Ascending aorta (tissue), 2 donors: ENCODE measurements at regions of chr14 and their contacts with region 1.

Region 1: GRCh38 chr14:91510174-91511042 is at the start of gene PPP4R3A:
- DNase-seq: peak; percentile 79 to 95
- H3K4me3 ChIP-seq: peak within 1 kb of the TSS; percentile 91 to 99
- H3K27ac ChIP-seq: peak within 1 kb of the TSS; percentile 96 to 100
- H3K4me1 ChIP-seq: peaks cover 0 to 19% of the 10 kb centered on the region in 2 donors
- H3K27me3 ChIP-seq: no peaks in the 10 kb centered on the region
- CTCF ChIP-seq: no peak
- total RNA-seq, gene PPP4R3A: 76.2 TPM

Region 2: GRCh38 chr14:90475298-90475697 is 1035.1 kb before region 1 on chr14:
- intact Hi-C with region 1: no loop called
- DNase-seq: no peak
- H3K4me3 ChIP-seq: no peak overlapping the region
- H3K27ac ChIP-seq: no peak overlapping the region
- H3K4me1 ChIP-seq: no peaks in the 10 kb centered on the region
- H3K27me3 ChIP-seq: no peaks in the 10 kb centered on the region
- CTCF ChIP-seq: no peak

Region 3: DNA sequence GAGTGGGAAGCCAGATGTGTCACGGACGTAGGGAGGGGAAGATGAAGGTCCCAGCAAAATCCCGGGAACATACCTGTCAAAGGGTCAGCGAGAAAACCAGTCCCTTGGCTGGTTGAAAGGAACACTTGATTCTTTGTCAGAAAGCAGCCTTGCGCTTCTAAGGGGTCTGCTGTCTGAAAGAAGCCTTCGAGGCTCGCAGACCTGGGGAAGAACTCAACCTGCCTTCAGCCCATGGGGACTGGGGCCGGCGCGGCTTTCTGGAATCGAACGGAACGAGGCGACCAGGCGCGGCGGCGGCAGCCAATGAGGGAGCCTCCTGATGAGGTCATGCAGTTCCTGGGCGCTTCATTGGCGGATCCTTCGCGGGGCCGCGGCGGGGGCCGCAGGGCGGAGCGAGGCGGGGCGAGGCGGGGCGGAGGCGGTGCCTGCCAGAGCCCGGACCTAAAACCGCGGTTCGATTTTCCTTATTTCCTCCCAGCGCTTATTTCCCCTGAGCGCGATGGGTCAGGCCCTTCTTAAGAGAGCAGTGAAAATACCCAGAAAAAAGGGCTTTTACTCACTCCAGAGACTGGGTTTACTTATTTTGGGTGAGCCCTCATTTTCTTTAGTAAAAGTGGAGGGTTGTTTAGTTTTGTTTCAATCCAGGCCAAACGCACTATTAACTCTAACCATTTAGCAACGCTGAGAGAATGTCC is 682.3 kb before region 1 on chr14:
- intact Hi-C with region 1: loop called (anchors 10 kb)
- DNase-seq: peak; percentile 76 to 96
- H3K4me3 ChIP-seq: peak overlapping the region; percentile 35 to 66
- H3K27ac ChIP-seq: peak overlapping the region; percentile 58 to 82
- H3K4me1 ChIP-seq: peaks cover 4 to 5% of the 10 kb centered on the region in 2 donors
- H3K27me3 ChIP-seq: no peaks in the 10 kb centered on the region
- CTCF ChIP-seq: no peak

Region 4: GRCh38 chr14:91060351-91061055 is 449.9 kb before region 1 on chr14 and contains the start of gene RPS6KA5:
- intact Hi-C with region 1: no loop called
- DNase-seq: peak; percentile 100
- H3K4me3 ChIP-seq: peak within 1 kb of the TSS; percentile 91 to 98
- H3K27ac ChIP-seq: peak within 1 kb of the TSS; percentile 94 to 99
- H3K4me1 ChIP-seq: peaks cover 3 to 9% of the 10 kb centered on the region in 2 donors
- H3K27me3 ChIP-seq: no peaks in the 10 kb centered on the region
- CTCF ChIP-seq: peak in 2 of 3 experiments; percentile 16 to 59
- total RNA-seq, gene RPS6KA5: 0.21 TPM

Region 5: GRCh38 chr14:91573893-91574837 is 63.8 kb after region 1 on chr14:
- intact Hi-C with region 1: loop called (anchors 1 kb)
- DNase-seq: peak; percentile 35 to 89
- H3K4me3 ChIP-seq: peak overlapping the region; percentile 54 to 68
- H3K27ac ChIP-seq: peak overlapping the region; percentile 76 to 90
- H3K4me1 ChIP-seq: peaks cover 0 to 2% of the 10 kb centered on the region in 2 donors
- H3K27me3 ChIP-seq: no peaks in the 10 kb centered on the region
- CTCF ChIP-seq: no peak

Region 6: DNA sequence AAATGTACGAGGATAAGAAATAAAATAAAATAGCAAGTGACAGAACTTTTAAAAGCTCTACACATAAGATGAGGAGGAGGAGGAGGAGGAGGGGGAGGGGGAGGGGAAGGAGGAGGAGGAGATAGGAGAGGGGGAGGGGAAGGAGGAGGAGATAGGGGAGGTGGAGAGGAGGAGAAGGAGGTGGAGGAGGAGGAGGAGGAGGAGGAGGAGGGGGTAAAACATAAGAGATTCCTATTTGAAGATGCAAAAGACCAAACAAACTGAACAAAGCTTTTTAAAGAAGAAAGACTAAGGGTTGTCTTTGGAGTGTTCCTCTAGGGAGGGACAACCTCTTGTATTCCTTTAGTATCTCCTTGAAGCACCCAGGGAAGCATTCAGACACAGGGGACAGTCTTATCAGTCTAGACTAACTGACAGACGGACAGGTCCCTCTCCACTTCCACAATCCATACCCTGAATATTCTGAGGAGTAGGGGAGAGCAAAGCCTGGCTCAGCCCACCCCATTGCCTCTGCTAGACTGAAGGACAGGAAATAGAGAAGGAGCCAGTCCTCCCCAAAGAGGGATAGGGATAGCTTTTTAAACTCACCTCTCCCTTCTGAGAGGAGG is 344.0 kb after region 1 on chr14:
- intact Hi-C with region 1: no loop called
- DNase-seq: no peak
- H3K4me3 ChIP-seq: no peak overlapping the region
- H3K27ac ChIP-seq: peak overlapping the region; percentile 70 to 76
- H3K4me1 ChIP-seq: peaks cover 0 to 16% of the 10 kb centered on the region in 2 donors
- H3K27me3 ChIP-seq: no peaks in the 10 kb centered on the region
- CTCF ChIP-seq: no peak

Region 7: GRCh38 chr14:92039719-92040430 is 529.5 kb after region 1 on chr14 and contains the start of gene TRIP11:
- intact Hi-C with region 1: loop called (anchors 10 kb)
- DNase-seq: peak; percentile 76 to 95
- H3K4me3 ChIP-seq: peak within 1 kb of the TSS; percentile 75 to 92
- H3K27ac ChIP-seq: peak within 1 kb of the TSS; percentile 95 to 99
- H3K4me1 ChIP-seq: peaks cover 3 to 37% of the 10 kb centered on the region in 2 donors
- H3K27me3 ChIP-seq: no peaks in the 10 kb centered on the region
- CTCF ChIP-seq: no peak
- total RNA-seq, gene TRIP11: 8.8 TPM

Region 8: GRCh38 chr14:92106143-92106926 is 595.9 kb after region 1 on chr14 and contains the start of gene ATXN3:
- intact Hi-C with region 1: loop called (anchors 5 kb)
- DNase-seq: peak; percentile 90 to 98
- H3K4me3 ChIP-seq: peak within 1 kb of the TSS; percentile 89 to 90
- H3K27ac ChIP-seq: peak within 1 kb of the TSS; percentile 93
- H3K4me1 ChIP-seq: peaks cover 4 to 15% of the 10 kb centered on the region in 2 donors
- H3K27me3 ChIP-seq: no peaks in the 10 kb centered on the region
- CTCF ChIP-seq: peak; percentile 62 to 83 (median 79)
- total RNA-seq, gene ATXN3: 90.4 TPM

Region 9: GRCh38 chr14:92121670-92122350 is 611.4 kb after region 1 on chr14 and contains the starts of genes CPSF2 and NDUFB1:
- intact Hi-C with region 1: loop called (anchors 5 kb)
- DNase-seq: peak in 1 of 2 donors; percentile 86
- H3K4me3 ChIP-seq: peak within 1 kb of the TSS; percentile 77 to 90
- H3K27ac ChIP-seq: peak within 1 kb of the TSS; percentile 89 to 94
- H3K4me1 ChIP-seq: peaks cover 0 to 12% of the 10 kb centered on the region in 2 donors
- H3K27me3 ChIP-seq: no peaks in the 10 kb centered on the region
- CTCF ChIP-seq: peak in 1 of 3 experiments; percentile 26
- total RNA-seq, gene CPSF2: 8.0 TPM
- total RNA-seq, gene NDUFB1: 867 TPM

Region 10: DNA sequence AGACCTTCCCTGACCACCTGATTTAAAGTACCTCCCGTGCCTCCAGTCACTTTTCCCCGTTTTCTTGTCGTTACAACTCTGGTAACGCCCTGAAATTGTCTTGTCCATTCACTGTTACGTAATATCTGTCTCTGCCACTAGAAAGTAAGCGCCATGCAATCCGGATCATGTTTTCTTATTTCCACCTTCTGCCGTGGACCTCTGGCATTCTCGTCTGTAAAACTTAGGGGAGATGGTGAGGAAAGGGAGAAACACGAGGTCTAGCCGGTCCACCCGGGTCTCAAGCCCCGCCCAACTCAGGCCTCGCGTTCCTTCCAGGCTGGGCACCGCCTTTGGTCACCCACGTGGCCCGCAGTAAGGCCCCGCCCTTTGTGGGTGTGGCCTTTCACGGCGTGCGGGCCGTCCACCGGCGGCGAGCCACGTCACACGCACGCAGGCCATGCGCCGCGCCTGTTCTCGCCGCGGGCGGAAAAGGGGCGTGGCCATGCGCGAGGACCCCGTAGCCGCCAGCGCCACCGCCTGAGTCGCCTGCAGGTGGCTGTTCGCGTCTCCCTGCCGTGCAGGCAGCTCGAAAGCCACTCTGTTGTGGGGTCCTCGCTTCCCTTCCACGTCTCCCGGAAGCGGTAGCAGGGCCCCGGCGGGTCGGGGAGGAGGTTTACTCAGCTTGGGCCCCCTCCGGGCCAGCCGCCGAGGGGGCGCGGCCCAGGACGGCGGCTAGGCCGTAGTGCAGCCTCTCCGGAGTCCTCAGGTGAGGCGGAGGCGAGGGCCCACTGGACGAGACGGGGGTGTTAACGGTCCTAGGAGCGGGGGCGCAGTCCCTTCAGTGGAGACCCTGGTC is 1283.5 kb after region 1 on chr14 and contains the start of gene GOLGA5:
- intact Hi-C with region 1: loop called (anchors 5 kb)
- DNase-seq: peak; percentile 88 to 99
- H3K4me3 ChIP-seq: peak within 1 kb of the TSS; percentile 80 to 98
- H3K27ac ChIP-seq: peak within 1 kb of the TSS; percentile 85 to 93
- H3K4me1 ChIP-seq: peaks cover 0 to 16% of the 10 kb centered on the region in 2 donors
- H3K27me3 ChIP-seq: no peaks in the 10 kb centered on the region
- CTCF ChIP-seq: peak; percentile 7 to 23 (median 15)
- total RNA-seq, gene GOLGA5: 26.3 TPM